ENCODE measurements at regions of chr10 and their contacts with region 1.

Region 1: GRCh38 chr10:21912625-21913024 is 90.9 kb downstream of the DNAJC1 start:
- DNase-seq: no peak
- H3K4me3 ChIP-seq: no peak overlapping the region
- H3K27ac ChIP-seq: no peak overlapping the region
- H3K4me1 ChIP-seq: no peaks in the 10 kb centered on the region
- H3K27me3 ChIP-seq: no peaks in the 10 kb centered on the region
- CTCF ChIP-seq: no peak

Region 2: DNA sequence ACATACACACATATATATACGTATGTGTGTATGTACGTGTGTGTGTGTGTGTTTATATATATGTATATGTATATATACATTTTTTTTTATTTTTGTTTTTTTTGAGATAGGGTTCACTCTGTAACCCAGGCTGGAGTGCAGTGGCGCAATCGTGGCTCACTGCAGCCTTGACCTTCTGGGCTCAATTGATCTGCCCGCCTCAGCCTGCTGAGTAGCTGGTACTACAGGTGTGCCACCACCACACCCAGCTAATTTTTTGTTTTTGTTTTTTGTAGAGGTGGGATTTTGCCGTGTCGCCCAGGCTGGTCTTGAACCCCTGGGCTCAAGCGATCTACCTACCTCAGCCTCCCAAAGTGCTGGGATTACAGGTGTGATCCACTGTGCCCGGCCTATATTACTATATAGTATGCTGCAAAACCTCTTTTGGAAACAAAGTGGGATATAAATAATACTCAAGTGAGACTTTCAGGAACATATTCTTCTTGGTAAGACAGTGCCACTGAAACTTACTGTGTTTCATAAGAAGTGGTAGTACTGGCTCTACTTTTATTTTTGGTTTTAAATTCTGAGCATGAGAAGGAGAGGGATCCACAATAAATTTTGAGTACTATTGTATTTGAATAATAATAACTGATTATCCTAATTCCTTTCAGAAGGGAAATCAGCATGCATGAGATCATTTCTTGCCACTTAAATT is 327.6 kb before region 1 on chr10:
- CTCF ChIA-PET with region 1: no interaction called
- dilution Hi-C with region 1: no loop called
- in situ Hi-C with region 1: no loop called
- intact Hi-C with region 1: no loop called
- DNase-seq: no peak
- H3K4me3 ChIP-seq: no peak overlapping the region
- H3K27ac ChIP-seq: no peak overlapping the region
- H3K4me1 ChIP-seq: no peaks in the 10 kb centered on the region
- H3K27me3 ChIP-seq: no peaks in the 10 kb centered on the region
- CTCF ChIP-seq: no peak

Region 3: DNA sequence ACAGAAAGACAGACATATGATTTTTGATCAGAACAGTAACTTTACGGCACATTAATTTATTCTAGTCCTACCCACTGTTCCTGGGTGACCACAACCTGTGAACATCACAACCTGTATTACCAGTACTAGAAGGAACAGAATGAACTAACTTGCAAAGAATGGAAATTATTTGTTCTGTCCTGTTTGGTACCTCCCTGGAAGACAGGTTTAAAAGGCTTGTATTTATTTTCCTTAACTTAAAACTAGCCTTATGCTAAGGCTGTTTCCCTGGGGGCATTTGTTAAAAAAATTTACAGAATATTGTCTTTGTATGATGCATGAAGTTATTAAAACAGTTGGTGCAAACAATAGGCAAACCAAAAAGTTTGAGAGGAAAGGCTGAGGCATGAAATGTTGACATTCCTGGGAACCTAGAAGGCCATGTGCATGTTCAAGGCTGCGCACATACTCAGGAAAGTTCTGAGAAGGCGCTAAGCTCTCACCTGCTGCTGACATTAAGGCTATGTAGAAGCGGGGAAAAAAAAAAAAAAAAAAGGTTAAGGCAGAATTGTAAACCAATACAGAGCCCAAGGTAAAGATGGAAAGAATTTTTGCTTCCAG is 41.7 kb before region 1 on chr10:
- CTCF ChIA-PET with region 1: no interaction called
- dilution Hi-C with region 1: loop called (anchors 5 kb)
- in situ Hi-C with region 1: no loop called
- intact Hi-C with region 1: no loop called
- DNase-seq: peak; percentile 37
- H3K4me3 ChIP-seq: no peak overlapping the region
- H3K27ac ChIP-seq: no peak overlapping the region
- H3K4me1 ChIP-seq: no peaks in the 10 kb centered on the region
- H3K27me3 ChIP-seq: no peaks in the 10 kb centered on the region
- CTCF ChIP-seq: no peak

Region 4: DNA sequence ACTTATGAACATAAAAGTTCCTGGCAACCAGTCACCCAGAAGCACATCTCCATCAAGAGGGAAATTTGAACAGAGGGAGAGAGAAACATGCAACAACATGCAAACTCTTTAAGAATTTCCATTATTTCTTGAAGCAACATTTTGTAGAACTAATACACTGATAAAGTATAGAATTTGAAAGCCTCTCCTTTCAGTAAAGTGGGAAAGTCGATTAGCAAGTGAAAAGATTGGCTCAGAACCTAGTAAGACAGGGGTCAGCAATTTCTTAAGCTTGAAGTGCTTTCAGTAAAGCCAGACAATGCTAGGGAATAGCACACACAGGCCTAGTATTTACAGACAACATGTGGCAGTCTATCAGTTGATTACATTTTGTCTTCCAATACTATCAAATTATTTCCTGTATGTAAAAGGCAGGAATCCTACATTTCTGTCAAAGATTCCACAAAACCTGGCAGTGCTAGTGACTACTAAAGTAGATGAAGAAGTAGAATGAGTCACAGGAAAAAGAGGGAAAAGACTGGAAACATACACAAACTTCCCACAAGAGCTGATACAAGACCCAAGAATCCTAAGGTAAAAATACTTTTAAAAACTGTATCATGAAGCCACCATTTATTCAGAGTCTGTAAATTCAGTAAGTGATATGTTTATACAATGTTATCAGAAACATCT is 65.7 kb after region 1 on chr10:
- CTCF ChIA-PET with region 1: no interaction called
- dilution Hi-C with region 1: no loop called
- in situ Hi-C with region 1: no loop called
- intact Hi-C with region 1: no loop called
- DNase-seq: peak; percentile 20
- H3K4me3 ChIP-seq: no peak overlapping the region
- H3K27ac ChIP-seq: no peak overlapping the region
- H3K4me1 ChIP-seq: peaks cover 5% of the 10 kb centered on the region
- H3K27me3 ChIP-seq: no peaks in the 10 kb centered on the region
- CTCF ChIP-seq: no peak

Measured in mammary epithelial cell (primary cell).